Activated T-helper 2 cell treated with anti-CD3 and anti-CD28 coated beads, Interferon-gamma antibody, Interleukin-2, Interleukin-4, amounts not matched to agents 10 μg/mL and 5 μg/mL and 100 μg/mL, durations not matched to agents 14 hours and 24 hours and 36 hours (primary cell): ENCODE measurements at regions of chr14 and their contacts with region 1.

Region 1: GRCh38 chr14:73949744-73950734 is at the starts of genes COQ6 and FAM161B:
- DNase-seq: peak; percentile 92
- H3K4me3 Mint-ChIP-seq: peak within 1 kb of the TSS; percentile 95
- H3K27ac Mint-ChIP-seq: peak within 1 kb of the TSS; percentile 79
- H3K4me1 Mint-ChIP-seq: peaks cover 8% of the 10 kb centered on the region
- H3K27me3 Mint-ChIP-seq: no peaks in the 10 kb centered on the region
- total RNA-seq, gene COQ6: 17.2 and 17.8 TPM in 2 replicates
- total RNA-seq, gene FAM161B: 0.57 and 0.68 TPM in 2 replicates

Region 2: GRCh38 chr14:72893636-72894321 is 1056.3 kb before region 1 on chr14 and contains the start of gene DPF3:
- intact Hi-C with region 1: no loop called
- DNase-seq: peak; percentile 91
- H3K4me3 Mint-ChIP-seq: peak within 1 kb of the TSS; percentile 89
- H3K27ac Mint-ChIP-seq: no peak within 1 kb of the TSS
- H3K4me1 Mint-ChIP-seq: peaks cover 24% of the 10 kb centered on the region
- H3K27me3 Mint-ChIP-seq: peaks cover 70% of the 10 kb centered on the region
- total RNA-seq, gene DPF3: 0.62 and 0.66 TPM in 2 replicates

Region 3: GRCh38 chr14:73886449-73887317 is 63.4 kb before region 1 on chr14 and contains the start of gene ZNF410:
- intact Hi-C with region 1: loop called (anchors 5 kb)
- DNase-seq: peak; percentile 84
- H3K4me3 Mint-ChIP-seq: peak within 1 kb of the TSS; percentile 84
- H3K27ac Mint-ChIP-seq: peak within 1 kb of the TSS; percentile 98
- H3K4me1 Mint-ChIP-seq: peaks cover 39% of the 10 kb centered on the region
- H3K27me3 Mint-ChIP-seq: no peaks in the 10 kb centered on the region
- total RNA-seq, gene ZNF410: 77.5 and 82.9 TPM in 2 replicates

Region 4: DNA sequence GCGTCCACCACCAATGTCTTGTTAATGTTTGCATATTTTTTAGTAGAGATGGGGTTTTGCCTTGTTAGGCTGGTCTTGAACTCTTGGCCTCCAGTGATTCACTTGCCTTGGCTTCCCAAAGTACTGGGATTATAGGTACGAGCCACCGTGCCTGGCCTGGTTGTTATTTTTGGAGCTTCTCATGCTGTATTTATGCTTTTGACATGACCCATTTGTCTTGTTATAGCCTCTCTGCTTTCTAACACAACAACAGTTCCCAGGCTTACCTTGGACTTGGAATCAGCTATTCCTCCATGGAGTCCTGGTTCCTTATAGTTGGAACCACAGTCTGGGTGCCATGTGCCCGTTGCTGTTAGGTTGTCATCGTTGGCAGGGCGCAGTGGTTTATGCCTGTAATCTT is 33.7 kb before region 1 on chr14:
- intact Hi-C with region 1: no loop called
- DNase-seq: no peak
- H3K4me3 Mint-ChIP-seq: no peak overlapping the region
- H3K27ac Mint-ChIP-seq: no peak overlapping the region
- H3K4me1 Mint-ChIP-seq: no peaks in the 10 kb centered on the region
- H3K27me3 Mint-ChIP-seq: no peaks in the 10 kb centered on the region

Region 5: GRCh38 chr14:74018586-74019407 is 68.8 kb after region 1 on chr14 and contains the starts of genes BBOF1 and ENTPD5:
- intact Hi-C with region 1: loop called (anchors 1 kb)
- DNase-seq: peak; percentile 86
- H3K4me3 Mint-ChIP-seq: peak within 1 kb of the TSS; percentile 97
- H3K27ac Mint-ChIP-seq: peak within 1 kb of the TSS; percentile 98
- H3K4me1 Mint-ChIP-seq: peaks cover 11% of the 10 kb centered on the region
- H3K27me3 Mint-ChIP-seq: peaks cover 2% of the 10 kb centered on the region
- total RNA-seq, gene BBOF1: 0.23 and 0.82 TPM in 2 replicates
- total RNA-seq, gene ENTPD5: 9.9 and 11.5 TPM in 2 replicates